GM12878 (cell line): ENCODE measurements at regions of chr1 and their contacts with region 1.

Region 1: DNA sequence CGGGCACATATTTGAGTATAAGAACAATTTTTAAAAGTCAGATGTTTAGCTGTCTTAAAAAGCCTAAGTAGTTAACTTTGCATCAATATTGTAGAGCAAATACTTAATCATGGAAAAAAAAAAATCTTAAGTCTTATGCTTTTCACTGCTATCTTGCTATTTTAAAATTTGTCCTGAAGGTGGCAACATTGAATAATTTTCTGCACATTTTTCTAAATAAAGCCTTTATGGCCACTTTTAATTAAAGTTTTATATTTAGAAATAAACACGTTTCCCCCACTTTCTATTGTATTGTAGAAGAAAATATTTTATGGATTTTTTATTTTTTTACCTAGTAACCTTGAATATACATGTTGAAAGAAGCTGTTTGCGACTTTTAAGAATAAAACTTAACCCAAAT is 198.8 kb downstream of the AMY1C start:
- DNase-seq: no peak
- ATAC-seq: no peak
- H3K4me3 ChIP-seq: no peak overlapping the region
- H3K27ac ChIP-seq: no peak overlapping the region
- H3K4me1 ChIP-seq: no peaks in the 10 kb centered on the region
- H3K27me3 ChIP-seq: no peaks in the 10 kb centered on the region
- CTCF ChIP-seq: peak in 2 of 3 experiments; percentile 6; a peak in 1 of 6 replicates
- EP300 ChIP-seq: no peak
- POLR2A ChIP-seq: no peak
- RAD21 ChIP-seq: peak; percentile 41; the same call in 1 of the 2 replicates

Region 2: DNA sequence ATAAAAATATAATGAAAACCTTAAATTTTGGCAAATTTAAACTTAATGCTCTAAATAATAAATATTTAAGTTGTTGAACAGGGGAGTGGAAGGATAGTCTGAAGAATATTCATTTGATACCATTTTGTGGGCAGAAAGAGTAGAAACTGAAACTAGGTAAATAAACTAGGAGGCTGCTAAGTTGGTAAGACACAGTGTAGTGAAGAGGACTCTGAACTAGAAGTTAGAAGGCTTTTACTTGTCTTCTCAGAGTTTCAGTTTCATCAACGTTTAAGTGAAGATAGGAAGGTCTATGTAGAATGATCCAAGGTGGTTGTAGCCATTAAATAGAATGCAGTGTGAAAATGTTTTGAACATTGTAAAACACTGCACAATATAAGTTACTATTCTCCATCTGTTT is 318.1 kb after region 1 on chr1:
- CTCF ChIA-PET with region 1: interaction called, 4 read pairs
- POLR2A ChIA-PET with region 1: no interaction called
- RAD21 ChIA-PET with region 1: no interaction called
- SMC1A ChIA-PET with region 1: no interaction called
- in situ Hi-C with region 1: no loop called
- intact Hi-C with region 1: loop called (anchors 5 kb)
- DNase-seq: no peak
- ATAC-seq: peak; percentile 44
- H3K4me3 ChIP-seq: no peak overlapping the region
- H3K27ac ChIP-seq: no peak overlapping the region
- H3K4me1 ChIP-seq: no peaks in the 10 kb centered on the region
- H3K27me3 ChIP-seq: no peaks in the 10 kb centered on the region
- CTCF ChIP-seq: no peak
- EP300 ChIP-seq: no peak
- POLR2A ChIP-seq: no peak
- RAD21 ChIP-seq: no peak

Region 3: DNA sequence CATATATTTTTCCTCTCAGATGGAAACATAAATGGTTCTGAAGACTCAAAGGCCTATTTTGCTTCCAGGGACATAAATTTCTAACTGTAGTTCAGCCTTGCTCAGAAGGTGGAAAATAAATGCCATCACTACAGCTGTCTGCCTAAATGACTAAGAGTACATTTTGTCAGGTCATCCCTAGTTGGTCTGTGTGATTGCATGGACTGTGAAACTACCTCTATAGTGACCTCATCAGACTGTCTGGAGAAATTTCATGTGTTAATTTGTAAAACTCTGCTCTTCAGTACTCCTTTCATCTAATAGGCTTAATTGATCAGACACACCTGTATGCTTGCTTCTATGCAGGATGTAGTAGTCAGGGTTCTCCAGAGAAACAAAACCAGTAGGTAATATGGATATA is 688.1 kb after region 1 on chr1:
- CTCF ChIA-PET with region 1: no interaction called
- POLR2A ChIA-PET with region 1: no interaction called
- RAD21 ChIA-PET with region 1: no interaction called
- SMC1A ChIA-PET with region 1: no interaction called
- in situ Hi-C with region 1: no loop called
- intact Hi-C with region 1: loop called (anchors 5 kb)
- DNase-seq: no peak
- ATAC-seq: peak; percentile 69
- H3K4me3 ChIP-seq: no peak overlapping the region
- H3K27ac ChIP-seq: no peak overlapping the region
- H3K4me1 ChIP-seq: no peaks in the 10 kb centered on the region
- H3K27me3 ChIP-seq: no peaks in the 10 kb centered on the region
- CTCF ChIP-seq: peak in 1 of 3 experiments; percentile 4; a peak in 1 of 6 replicates
- EP300 ChIP-seq: no peak
- POLR2A ChIP-seq: no peak
- RAD21 ChIP-seq: no peak